ENCODE measurements at regions of chr6 and their contacts with region 1.

Region 1: GRCh38 chr6:123715006-123715875 is 78.5 kb upstream of the TRDN start:
- DNase-seq: peak; percentile 34
- H3K4me3 Mint-ChIP-seq: no peak overlapping the region
- H3K27ac Mint-ChIP-seq: no peak overlapping the region
- H3K4me1 Mint-ChIP-seq: no peaks in the 10 kb centered on the region
- H3K27me3 Mint-ChIP-seq: no peaks in the 10 kb centered on the region
- CTCF ChIP-seq: peak; percentile 17

Region 2: GRCh38 chr6:123393328-123393727 is 321.9 kb before region 1 on chr6:
- CTCF ChIA-PET with region 1: interaction called, 12 read pairs
- intact Hi-C with region 1: loop called (anchors 1 kb)
- DNase-seq: no peak
- H3K4me3 Mint-ChIP-seq: no peak overlapping the region
- H3K27ac Mint-ChIP-seq: no peak overlapping the region
- H3K4me1 Mint-ChIP-seq: no peaks in the 10 kb centered on the region
- H3K27me3 Mint-ChIP-seq: no peaks in the 10 kb centered on the region
- CTCF ChIP-seq: peak; percentile 16

Region 3: GRCh38 chr6:123415844-123416468 is 299.3 kb before region 1 on chr6:
- CTCF ChIA-PET with region 1: interaction called, 12 read pairs
- intact Hi-C with region 1: loop called (anchors 1 kb)
- DNase-seq: peak; percentile 48
- H3K4me3 Mint-ChIP-seq: no peak overlapping the region
- H3K27ac Mint-ChIP-seq: no peak overlapping the region
- H3K4me1 Mint-ChIP-seq: no peaks in the 10 kb centered on the region
- H3K27me3 Mint-ChIP-seq: no peaks in the 10 kb centered on the region
- CTCF ChIP-seq: peak; percentile 29

Measured in Calu3 (cell line).